ENCODE measurements at regions of chr22 and their contacts with region 1.

Region 1: DNA sequence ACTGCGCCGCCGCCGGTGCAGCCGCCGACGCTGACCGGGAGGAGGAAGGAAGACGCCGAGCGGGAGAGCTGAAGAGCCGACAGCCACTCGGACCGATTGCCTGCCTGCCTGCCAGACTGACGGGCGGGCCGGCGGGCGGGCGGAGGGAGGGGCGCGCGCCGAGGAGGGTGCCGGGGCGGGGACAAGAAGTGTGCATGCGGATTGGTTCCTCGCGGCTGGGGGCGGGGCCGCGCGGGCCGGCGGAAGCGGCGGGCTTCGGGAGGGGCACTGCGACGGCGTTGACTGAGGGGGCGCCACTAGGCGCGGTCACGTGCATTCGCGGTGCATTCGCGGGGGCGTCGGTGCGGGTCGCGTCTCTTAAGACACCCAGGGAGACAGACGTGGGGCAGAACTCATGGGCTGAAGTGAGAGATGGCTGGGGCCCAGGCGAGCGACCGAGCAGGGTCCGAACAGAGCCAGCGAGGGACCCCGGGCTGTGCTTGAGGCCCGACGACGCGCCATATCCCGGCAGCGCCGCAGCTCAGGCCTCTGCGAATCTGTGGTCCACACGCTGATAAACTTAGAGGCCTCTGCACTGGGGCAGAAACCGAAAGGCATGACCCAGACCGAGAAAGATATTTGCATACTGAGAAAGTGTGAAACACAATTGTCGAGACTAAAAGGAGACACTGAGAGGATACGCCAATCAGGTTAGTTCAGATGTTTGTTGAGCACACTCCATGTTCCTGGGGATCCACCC is at the start of gene MAPK1:
- DNase-seq: peak; percentile 71 to 96
- H3K4me3 ChIP-seq: peak within 1 kb of the TSS; percentile 89 to 93
- H3K27ac ChIP-seq: peak within 1 kb of the TSS; percentile 87 to 91
- H3K4me1 ChIP-seq: peaks cover 3 to 21% of the 10 kb centered on the region in 2 donors
- H3K27me3 ChIP-seq: no peaks in the 10 kb centered on the region
- CTCF ChIP-seq: peak in 2 of 3 experiments; percentile 41 to 43
- total RNA-seq, gene MAPK1: 43.3 TPM

Region 2: DNA sequence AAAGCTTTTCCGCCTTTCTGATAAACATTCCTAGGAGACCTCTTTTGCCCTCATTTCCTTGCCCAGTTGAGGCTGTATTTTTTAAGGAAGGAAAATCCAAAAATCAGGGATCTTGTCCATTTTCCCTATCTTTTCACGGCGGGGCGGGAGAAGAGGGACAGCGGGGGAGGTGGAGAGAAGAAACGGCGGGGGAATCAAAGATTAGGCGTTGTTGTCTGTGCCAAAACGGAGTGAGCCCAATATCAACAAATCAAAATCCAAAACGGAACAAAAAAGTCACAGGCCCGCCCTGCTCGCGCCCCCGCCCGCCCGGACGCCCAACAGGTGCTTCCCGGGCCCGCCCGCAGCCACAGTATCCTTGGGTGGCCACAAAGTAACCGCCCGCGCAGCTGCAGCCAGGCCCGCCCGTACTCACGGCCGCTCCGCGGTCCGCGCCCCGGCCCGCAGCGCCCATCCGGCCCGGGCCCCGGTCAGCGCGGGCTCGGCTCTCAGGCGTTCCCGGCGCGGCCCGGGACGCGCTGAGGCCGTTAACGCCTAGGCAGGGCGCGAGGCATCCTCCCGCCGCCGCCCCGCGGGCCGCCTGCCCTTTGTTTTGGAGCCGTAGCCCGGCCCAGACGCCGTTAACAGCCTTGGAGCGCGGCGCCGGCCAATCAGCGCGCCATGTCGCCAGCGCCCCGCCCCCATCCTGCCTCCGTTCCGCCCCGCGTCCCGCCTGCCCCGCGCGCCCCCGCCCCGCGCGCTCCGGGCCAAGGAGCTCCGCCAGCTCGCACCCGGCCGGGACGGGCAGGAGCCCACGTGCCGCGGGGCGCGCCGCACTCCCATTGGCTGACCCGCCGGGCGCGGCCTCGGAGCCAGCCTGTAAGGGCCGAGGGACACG is 132.3 kb before region 1 on chr22 and contains the start of gene YPEL1:
- intact Hi-C with region 1: loop called (anchors 5 kb)
- DNase-seq: peak; percentile 91 to 98
- H3K4me3 ChIP-seq: peak within 1 kb of the TSS; percentile 69 to 78
- H3K27ac ChIP-seq: peak within 1 kb of the TSS; percentile 58 to 72
- H3K4me1 ChIP-seq: peaks cover 0 to 7% of the 10 kb centered on the region in 2 donors
- H3K27me3 ChIP-seq: no peaks in the 10 kb centered on the region
- CTCF ChIP-seq: peak in 1 of 3 experiments; percentile 8
- total RNA-seq, gene YPEL1: 1.1 TPM

Region 3: DNA sequence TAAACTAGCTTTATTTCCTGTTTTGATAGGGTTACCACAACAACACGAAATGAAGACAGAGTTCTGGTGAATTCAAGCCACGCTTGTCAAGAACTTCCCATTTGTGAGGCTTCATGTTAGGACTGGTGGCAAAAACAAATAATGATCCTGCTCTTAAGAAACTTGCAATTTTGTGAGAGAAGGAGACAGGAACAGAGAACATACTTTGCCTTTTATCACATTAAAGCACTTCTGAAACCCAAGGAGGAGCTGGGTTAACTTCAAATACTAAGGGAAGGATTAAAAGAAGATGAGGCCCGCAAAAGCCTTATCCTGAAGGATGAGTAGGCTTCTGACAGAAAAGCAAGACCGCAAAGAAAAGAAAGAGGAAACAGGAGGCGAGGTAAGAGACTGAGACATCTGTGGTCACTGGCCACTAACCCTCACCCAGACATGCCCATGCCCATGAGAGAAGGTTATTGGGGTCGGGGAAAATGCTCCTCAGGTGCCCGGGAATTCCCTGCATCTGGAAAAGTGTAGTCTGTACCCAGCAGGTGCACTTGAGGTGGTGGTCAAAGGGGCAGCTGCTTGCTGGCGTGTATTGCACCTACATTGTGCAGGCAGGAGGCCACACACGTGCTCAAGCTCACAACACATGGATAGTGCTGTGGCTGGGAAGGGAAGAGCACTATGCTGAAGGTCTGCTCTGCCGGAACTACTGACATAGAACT is 50.8 kb before region 1 on chr22:
- intact Hi-C with region 1: loop called (anchors 5 kb)
- DNase-seq: no peak
- H3K4me3 ChIP-seq: no peak overlapping the region
- H3K27ac ChIP-seq: peak overlapping the region; percentile 67 to 78
- H3K4me1 ChIP-seq: peaks cover 0 to 21% of the 10 kb centered on the region in 2 donors
- H3K27me3 ChIP-seq: no peaks in the 10 kb centered on the region
- CTCF ChIP-seq: no peak

Region 4: DNA sequence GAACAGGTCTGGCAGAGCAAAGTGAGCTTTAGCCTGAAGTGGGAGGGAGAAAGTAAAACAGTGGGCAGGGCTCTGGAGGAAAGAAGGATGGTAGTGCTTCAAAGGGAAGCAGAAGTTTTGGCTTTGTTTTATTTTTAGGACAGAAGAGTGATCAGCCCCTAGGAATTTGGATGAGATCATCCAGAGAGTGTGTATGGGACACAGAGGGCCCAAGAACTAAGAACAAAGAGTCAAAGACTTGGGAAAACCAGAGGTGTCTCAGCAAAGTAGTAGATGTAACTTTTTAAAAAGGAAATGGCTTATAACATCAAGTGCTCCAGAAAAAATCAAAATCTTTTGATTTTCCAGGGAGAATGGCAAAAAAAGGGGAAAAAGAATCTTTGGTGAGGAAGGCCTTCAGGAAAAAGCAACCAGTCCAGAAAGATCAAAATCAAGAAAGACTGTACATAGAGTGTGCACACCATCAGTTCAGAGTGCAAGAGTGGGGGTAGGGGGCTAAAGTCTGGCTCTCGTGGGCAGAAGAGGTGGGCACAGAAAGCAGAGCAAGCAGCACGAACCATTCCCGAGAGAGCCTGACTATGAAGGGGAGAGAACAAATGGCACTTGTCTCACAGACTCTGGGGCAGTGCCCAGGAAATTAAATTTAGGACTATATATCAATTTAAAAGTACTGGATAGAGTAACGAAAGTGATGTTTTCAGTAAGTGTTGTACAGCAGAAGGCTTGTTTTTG is 30.3 kb before region 1 on chr22:
- intact Hi-C with region 1: loop called (anchors 2 kb)
- DNase-seq: peak in 1 of 2 donors; percentile 71
- H3K4me3 ChIP-seq: peak overlapping the region in 1 of 2 donors; percentile 34
- H3K27ac ChIP-seq: peak overlapping the region; percentile 87 to 88
- H3K4me1 ChIP-seq: peaks cover 2 to 35% of the 10 kb centered on the region in 2 donors
- H3K27me3 ChIP-seq: no peaks in the 10 kb centered on the region
- CTCF ChIP-seq: no peak

Region 5: GRCh38 chr22:21850660-21851059 is 17.0 kb before region 1 on chr22:
- intact Hi-C with region 1: loop called (anchors 1 kb)
- DNase-seq: no peak
- H3K4me3 ChIP-seq: no peak overlapping the region
- H3K27ac ChIP-seq: peak overlapping the region; percentile 75 to 77
- H3K4me1 ChIP-seq: peaks cover 7 to 42% of the 10 kb centered on the region in 2 donors
- H3K27me3 ChIP-seq: no peaks in the 10 kb centered on the region
- CTCF ChIP-seq: no peak